Colonic mucosa (tissue), 4 donors: ENCODE measurements at regions of chr10 and their contacts with region 1.

Region 1: DNA sequence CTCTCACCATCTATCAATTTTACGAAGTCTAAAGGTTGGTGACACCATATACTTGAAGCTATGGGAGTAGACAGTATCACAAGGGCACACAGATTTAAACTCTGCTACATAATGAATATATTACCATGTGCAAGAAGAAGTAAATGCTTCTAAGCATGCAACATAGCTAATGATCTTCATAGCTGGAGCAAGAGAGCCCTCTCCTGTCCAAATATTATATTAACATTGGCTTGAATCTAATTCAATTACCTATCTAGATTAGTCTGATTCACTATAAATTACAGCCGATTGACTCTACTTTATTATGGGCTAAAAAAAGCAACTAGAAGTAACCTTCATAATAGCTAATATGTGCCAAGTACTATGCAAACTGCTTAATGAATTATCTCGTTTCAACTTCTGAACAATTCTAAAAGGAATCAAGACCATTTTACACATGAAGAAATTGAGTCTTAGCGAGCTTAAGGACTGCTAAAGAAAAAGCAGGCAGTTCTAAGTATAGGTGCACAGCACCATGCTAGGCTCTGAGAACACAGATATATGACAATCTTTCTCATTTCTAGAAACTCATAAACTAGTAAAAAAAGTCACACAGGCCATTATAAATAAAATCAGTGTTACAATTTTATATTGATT is 21.9 kb downstream of the FRA10AC1 start:
- DNase-seq: no peak
- H3K4me3 ChIP-seq: no peak overlapping the region
- H3K27ac ChIP-seq: no peak overlapping the region
- H3K4me1 ChIP-seq: no peaks in the 10 kb centered on the region
- H3K27me3 ChIP-seq: no peaks in the 10 kb centered on the region
- CTCF ChIP-seq: peak; percentile 23

Region 2: GRCh38 chr10:93376372-93377293 is 303.9 kb before region 1 on chr10:
- intact Hi-C with region 1: loop called (anchors 10 kb)
- DNase-seq: peak; percentile 75
- H3K4me3 ChIP-seq: no peak overlapping the region
- H3K27ac ChIP-seq: peak overlapping the region; percentile 62
- H3K4me1 ChIP-seq: no peaks in the 10 kb centered on the region
- H3K27me3 ChIP-seq: no peaks in the 10 kb centered on the region
- CTCF ChIP-seq: peak; percentile 90

Region 3: GRCh38 chr10:93541402-93542357 is 138.8 kb before region 1 on chr10:
- intact Hi-C with region 1: loop called (anchors 5 kb)
- DNase-seq: peak; percentile 75
- H3K4me3 ChIP-seq: no peak overlapping the region
- H3K27ac ChIP-seq: peak overlapping the region; percentile 56
- H3K4me1 ChIP-seq: no peaks in the 10 kb centered on the region
- H3K27me3 ChIP-seq: no peaks in the 10 kb centered on the region
- CTCF ChIP-seq: peak; percentile 91

Region 4: GRCh38 chr10:93554760-93555432 is 125.6 kb before region 1 on chr10:
- intact Hi-C with region 1: loop called (anchors 5 kb)
- DNase-seq: peak; percentile 88
- H3K4me3 ChIP-seq: no peak overlapping the region
- H3K27ac ChIP-seq: peak overlapping the region; percentile 16
- H3K4me1 ChIP-seq: no peaks in the 10 kb centered on the region
- H3K27me3 ChIP-seq: no peaks in the 10 kb centered on the region
- CTCF ChIP-seq: peak; percentile 49

Region 5: DNA sequence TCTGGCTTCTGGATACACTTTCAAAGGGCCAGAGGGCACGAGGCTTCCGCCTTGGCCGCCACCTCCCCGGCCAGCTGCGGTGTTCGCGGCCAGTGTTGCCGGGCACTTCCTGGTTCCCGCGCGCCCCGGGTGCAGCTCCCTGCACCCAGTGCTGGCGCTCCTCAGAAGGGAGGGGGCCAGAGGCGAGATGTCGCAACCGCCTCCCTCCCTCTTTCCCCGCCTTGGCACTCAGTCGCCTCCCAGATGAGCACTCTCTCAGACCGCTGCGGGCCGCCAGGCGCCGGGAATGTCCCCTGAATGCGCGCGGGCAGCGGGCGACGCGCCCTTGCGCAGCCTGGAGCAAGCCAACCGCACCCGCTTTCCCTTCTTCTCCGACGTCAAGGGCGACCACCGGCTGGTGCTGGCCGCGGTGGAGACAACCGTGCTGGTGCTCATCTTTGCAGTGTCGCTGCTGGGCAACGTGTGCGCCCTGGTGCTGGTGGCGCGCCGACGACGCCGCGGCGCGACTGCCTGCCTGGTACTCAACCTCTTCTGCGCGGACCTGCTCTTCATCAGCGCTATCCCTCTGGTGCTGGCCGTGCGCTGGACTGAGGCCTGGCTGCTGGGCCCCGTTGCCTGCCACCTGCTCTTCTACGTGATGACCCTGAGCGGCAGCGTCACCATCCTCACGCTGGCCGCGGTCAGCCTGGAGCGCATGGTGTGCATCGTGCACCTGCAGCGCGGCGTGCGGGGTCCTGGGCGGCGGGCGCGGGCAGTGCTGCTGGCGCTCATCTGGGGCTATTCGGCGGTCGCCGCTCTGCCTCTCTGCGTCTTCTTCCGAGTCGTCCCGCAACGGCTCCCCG is 113.9 kb before region 1 on chr10 and contains the start of gene FFAR4:
- intact Hi-C with region 1: no loop called
- DNase-seq: peak; percentile 75
- H3K4me3 ChIP-seq: peak within 1 kb of the TSS; percentile 37
- H3K27ac ChIP-seq: peak within 1 kb of the TSS; percentile 42
- H3K4me1 ChIP-seq: no peaks in the 10 kb centered on the region
- H3K27me3 ChIP-seq: no peaks in the 10 kb centered on the region
- CTCF ChIP-seq: no peak
- total RNA-seq, gene FFAR4: 44.2 to 48.2 TPM

Region 6: DNA sequence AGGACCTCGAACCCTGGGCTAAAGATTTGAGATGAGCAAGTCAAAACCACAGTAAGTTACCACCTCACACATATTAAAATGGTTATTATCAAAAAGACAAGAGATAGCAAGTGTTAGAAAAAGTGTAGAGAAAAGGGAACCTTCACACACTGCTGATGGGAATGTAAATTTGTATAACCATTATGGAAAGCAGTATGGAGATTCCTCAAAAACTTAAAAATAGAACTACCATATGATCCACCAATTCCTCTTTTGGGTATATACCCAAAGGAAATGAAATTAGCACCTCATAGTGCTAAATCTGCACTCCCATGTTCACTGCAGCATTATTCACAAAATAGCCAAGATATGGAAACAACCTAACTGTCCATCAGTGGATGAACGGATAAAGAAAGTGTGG is 42.6 kb after region 1 on chr10:
- intact Hi-C with region 1: no loop called
- DNase-seq: no peak
- H3K4me3 ChIP-seq: no peak overlapping the region
- H3K27ac ChIP-seq: no peak overlapping the region
- H3K4me1 ChIP-seq: no peaks in the 10 kb centered on the region
- H3K27me3 ChIP-seq: no peaks in the 10 kb centered on the region
- CTCF ChIP-seq: no peak